Activated CD4-positive, alpha-beta T cell treated with anti-CD3 and anti-CD28 coated beads, Interleukin-2, amount 10 ng/mL, durations not matched to agents 7 days and 5 days (primary cell): ENCODE measurements at regions of chr7 and their contacts with region 1.

Region 1: DNA sequence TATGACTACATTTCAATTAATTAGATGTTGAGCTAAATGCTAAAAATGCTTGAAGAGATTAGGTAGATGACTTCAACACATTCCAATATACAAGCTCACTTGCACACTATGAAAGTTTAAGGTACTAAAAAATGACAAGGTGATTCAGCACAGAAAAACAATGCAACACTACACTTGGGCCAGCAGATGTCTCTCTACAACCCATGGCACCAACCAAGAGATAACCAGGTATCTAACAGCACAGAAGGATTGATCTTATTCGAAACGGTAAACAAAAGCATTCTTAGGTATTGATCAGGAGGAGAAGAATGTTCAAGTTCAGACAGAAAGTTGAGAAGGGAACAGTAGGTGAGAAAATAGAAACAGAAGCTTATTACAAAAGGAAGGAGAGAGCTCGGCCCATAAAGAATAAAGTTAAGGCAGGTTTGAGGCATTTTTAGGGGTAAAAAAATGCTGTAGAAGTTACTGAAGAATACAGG is 248.2 kb upstream of the KLF14 start:
- DNase-seq: peak; percentile 46
- H3K4me3 Mint-ChIP-seq: no peak overlapping the region
- H3K27ac Mint-ChIP-seq: no peak overlapping the region
- H3K4me1 Mint-ChIP-seq: peaks cover 33% of the 10 kb centered on the region
- H3K27me3 Mint-ChIP-seq: no peaks in the 10 kb centered on the region

Region 2: GRCh38 chr7:130921391-130922180 is 60.6 kb before region 1 on chr7:
- CTCF ChIA-PET with region 1: no interaction called
- POLR2A ChIA-PET with region 1: no interaction called
- DNase-seq: no peak
- H3K4me3 Mint-ChIP-seq: no peak overlapping the region
- H3K27ac Mint-ChIP-seq: no peak overlapping the region
- H3K4me1 Mint-ChIP-seq: peaks cover 89% of the 10 kb centered on the region
- H3K27me3 Mint-ChIP-seq: no peaks in the 10 kb centered on the region

Region 3: GRCh38 chr7:130970696-130971095 is 11.5 kb before region 1 on chr7:
- CTCF ChIA-PET with region 1: interaction called, 27 read pairs
- POLR2A ChIA-PET with region 1: no interaction called
- DNase-seq: no peak
- H3K4me3 Mint-ChIP-seq: no peak overlapping the region
- H3K27ac Mint-ChIP-seq: peak overlapping the region; percentile 72
- H3K4me1 Mint-ChIP-seq: peaks cover 71% of the 10 kb centered on the region
- H3K27me3 Mint-ChIP-seq: no peaks in the 10 kb centered on the region

Region 4: DNA sequence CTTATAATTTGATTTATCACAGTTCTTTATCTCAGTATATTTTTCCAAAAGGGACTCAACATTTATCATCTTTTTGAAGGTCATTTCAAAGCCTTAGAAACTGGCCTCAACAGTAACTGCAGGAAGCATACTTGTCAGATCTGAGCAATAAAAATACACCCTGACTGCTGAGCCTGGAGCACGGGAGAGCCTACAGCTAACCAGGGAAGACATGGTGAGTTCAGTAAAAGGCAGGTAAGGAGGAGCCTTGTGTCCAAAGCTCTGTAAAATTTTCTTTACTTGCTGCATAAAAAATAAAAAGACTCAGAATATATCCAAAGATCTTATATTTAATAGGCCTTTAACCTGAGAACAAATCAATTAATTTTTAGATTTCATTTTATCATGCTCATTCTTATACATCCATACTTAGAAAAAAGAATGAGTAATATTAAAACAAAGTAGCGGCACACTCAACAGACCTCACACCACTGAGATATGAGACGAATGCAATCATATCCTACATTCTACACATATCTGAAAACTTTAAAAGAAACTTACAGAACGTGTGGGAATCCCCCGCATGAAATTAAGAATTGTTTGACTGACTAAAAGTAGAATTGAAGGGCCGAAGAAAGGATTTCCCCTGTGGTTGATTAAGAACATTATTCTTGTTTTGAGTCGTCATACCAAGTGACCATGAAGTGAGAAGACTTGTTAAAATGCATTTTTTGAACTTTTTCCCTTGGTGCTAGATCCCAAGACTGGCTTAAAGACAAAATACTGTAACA is 49.1 kb after region 1 on chr7:
- CTCF ChIA-PET with region 1: no interaction called
- POLR2A ChIA-PET with region 1: no interaction called
- DNase-seq: no peak
- H3K4me3 Mint-ChIP-seq: peak overlapping the region; percentile 35
- H3K27ac Mint-ChIP-seq: peak overlapping the region; percentile 69
- H3K4me1 Mint-ChIP-seq: peaks cover 67% of the 10 kb centered on the region
- H3K27me3 Mint-ChIP-seq: no peaks in the 10 kb centered on the region